ENCODE measurements at regions of chr5 and their contacts with region 1.

Region 1: DNA sequence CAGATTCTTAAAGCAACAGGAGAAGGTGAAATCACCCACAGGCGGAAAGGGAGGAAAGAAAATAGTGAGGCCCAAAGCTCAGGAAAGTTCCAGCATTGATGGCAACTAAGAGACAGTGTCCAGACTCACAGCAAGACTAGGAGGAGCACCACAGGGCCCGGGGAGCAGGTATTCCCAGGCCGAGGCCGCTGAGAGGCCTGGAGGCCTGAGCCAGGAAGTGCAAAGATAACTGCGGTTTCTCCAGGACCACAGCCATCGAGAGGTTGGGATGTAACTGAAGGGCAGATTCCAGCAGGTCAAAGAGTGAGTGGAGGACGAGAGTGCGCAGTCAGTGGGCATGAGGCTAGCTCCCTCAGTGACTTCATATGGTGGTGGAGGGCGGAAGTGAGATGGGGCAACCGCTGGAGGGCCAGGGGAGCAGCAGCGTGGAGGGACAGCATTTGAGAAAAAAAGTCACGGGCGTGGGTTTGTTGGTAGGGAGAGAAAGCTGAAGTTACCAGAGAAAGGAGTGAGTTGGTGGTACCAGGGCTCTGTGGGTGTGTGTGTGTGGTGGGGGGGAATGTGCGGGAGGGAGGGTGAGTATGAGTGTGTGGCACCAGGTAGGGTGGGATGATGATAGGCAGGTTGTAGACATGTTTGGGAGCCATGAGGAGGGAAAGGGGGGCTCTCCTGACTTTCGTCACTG is 89.7 kb downstream of the PSD2 start:
- DNase-seq: no peak

Region 2: DNA sequence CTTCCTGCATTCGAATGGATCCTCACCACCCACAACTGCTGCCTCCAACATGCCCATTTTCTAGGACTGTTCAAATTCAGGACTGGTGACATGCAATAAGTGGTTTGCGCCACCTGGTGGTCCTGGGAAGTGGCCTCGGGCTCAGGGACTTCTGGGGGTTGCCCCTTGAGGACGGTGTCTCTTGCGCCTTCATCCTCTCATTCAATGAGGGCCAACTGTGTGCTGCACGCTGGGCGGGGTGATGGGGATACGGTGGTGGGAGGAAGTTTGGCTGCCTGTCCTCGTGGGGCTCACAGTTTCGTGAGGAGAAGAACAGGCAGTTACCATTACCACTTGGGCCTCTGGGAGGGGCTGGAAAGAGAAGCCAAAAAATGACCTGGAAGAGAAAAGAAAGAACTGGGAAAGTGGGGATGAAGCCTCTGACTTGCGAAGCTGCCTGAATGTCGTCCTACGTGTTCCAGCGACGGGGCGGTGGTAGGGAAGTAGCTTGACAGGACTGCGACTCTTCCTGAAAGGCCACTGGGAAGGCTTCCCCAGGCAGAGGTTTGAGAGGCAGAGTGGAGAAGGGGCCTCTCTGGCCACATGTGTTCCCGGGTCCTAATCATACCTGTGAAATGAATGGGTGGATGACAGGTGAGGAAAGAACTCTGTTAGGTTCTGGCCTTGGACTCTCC is 40.7 kb before region 1 on chr5:
- intact Hi-C with region 1: loop called in 1 of 2 experiments (anchors 1 kb)
- DNase-seq: peak; percentile 91

Measured in posterior vena cava (tissue), 2 donors.